ENCODE measurements at regions of chr2 and their contacts with region 1.

Region 1: DNA sequence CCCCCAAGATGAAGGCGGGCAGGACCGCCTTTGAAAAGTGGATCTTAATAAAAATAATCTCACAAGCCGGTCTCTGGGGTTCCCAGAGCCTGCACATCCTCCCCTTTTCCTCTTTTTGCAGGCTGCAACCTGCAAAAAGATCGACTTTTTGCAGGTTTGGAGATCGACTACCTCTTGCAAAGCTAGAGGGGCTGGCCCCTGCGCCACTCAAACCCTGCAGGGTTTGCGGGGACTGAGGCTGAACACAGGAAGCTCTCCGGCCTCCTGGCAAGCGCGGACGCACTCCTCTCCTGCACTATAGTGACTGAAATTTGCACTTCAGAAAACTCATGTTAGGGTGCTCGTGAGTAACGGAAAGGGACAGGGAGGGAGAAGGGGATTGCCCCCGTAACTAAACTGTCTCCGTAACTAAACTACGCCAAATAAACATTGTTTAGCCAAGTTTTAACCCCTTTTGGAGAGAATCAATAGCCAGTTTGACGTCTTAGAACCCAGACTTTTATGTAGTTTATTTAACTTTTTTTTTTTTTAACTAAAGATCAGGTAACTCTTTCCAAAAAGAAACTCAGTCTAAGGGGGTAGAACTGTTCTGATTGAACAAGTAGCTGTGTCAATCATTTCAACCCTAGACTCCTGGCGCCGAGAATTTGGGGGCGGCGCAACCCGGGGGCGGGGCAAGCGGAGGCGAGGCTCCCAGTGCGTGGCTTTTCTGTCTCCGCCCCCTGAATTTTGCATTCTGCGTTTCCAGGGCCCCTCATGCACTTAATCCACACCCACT is 2.5 kb downstream of the IGFBP5 start:
- DNase-seq: peak; percentile 84
- ATAC-seq: peak; percentile 59
- H3K4me3 Mint-ChIP-seq: peak overlapping the region; percentile 74
- H3K27ac Mint-ChIP-seq: peak overlapping the region; percentile 61
- H3K4me1 Mint-ChIP-seq: peaks cover 32% of the 10 kb centered on the region
- H3K27me3 Mint-ChIP-seq: peaks cover 56% of the 10 kb centered on the region

Region 2: DNA sequence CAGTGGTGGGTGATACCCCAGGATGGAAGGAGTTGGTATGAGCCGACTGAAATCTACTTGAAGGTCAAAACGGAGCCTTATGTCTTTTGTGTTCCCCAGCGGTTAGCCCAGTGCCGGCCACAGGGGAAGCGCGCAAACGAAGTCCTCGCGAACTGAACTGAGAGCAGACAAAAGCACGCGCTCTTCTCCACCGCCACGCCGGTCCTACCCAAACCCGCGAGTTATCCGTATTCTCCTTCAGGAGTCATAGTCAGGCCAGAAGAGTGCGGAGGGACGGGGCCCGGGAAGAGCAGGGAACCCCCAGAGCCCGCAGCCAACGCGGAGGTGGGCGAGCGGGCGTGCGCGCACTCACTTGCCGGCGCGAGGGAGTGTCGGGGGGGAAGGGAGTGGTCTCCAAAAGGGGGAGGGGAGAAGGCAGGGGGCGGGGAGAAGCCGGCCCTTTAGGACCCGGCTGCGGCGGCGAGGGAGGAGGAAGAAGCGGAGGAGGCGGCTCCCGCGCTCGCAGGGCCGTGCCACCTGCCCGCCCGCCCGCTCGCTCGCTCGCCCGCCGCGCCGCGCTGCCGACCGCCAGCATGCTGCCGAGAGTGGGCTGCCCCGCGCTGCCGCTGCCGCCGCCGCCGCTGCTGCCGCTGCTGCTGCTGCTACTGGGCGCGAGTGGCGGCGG is 59.7 kb before region 1 on chr2 and contains the start of gene IGFBP2:
- CTCF ChIA-PET with region 1: no interaction called
- POLR2A ChIA-PET with region 1: no interaction called
- intact Hi-C with region 1: loop called (anchors 2 to 5 kb)
- DNase-seq: peak; percentile 66
- ATAC-seq: peak; percentile 55
- H3K4me3 Mint-ChIP-seq: peak within 1 kb of the TSS; percentile 76
- H3K27ac Mint-ChIP-seq: no peak within 1 kb of the TSS
- H3K4me1 Mint-ChIP-seq: peaks cover 23% of the 10 kb centered on the region
- H3K27me3 Mint-ChIP-seq: peaks cover 53% of the 10 kb centered on the region
- total RNA-seq, gene IGFBP2: 9.8 to 11.5 TPM

Region 3: GRCh38 chr2:216661639-216662375 is 31.0 kb before region 1 on chr2:
- CTCF ChIA-PET with region 1: no interaction called
- POLR2A ChIA-PET with region 1: no interaction called
- intact Hi-C with region 1: no loop called
- DNase-seq: peak; percentile 43
- ATAC-seq: no peak
- H3K4me3 Mint-ChIP-seq: no peak overlapping the region
- H3K27ac Mint-ChIP-seq: no peak overlapping the region
- H3K4me1 Mint-ChIP-seq: no peaks in the 10 kb centered on the region
- H3K27me3 Mint-ChIP-seq: no peaks in the 10 kb centered on the region

Region 4: DNA sequence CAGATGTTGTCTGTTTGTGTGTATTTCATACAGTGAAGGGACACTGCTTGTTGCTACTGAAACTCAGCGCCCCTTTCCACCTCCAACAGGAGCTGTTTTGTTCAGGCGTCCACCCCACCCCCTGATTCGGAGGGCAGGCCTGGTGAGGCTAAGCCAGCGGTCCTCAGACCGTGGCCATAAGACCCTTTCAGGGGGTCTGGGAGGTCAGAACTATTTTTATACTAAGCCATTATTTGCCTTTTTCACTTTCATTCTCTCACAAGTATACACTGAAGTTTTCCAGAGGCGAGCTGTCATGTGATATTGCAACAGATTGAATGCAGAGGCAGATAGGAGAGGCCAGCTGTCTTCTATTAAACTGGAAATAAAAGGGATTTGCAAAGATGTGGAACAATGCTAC is 42.3 kb after region 1 on chr2:
- CTCF ChIA-PET with region 1: no interaction called
- POLR2A ChIA-PET with region 1: no interaction called
- intact Hi-C with region 1: no loop called
- DNase-seq: no peak
- ATAC-seq: no peak
- H3K4me3 Mint-ChIP-seq: no peak overlapping the region
- H3K27ac Mint-ChIP-seq: no peak overlapping the region
- H3K4me1 Mint-ChIP-seq: no peaks in the 10 kb centered on the region
- H3K27me3 Mint-ChIP-seq: peaks cover 2% of the 10 kb centered on the region

Region 5: DNA sequence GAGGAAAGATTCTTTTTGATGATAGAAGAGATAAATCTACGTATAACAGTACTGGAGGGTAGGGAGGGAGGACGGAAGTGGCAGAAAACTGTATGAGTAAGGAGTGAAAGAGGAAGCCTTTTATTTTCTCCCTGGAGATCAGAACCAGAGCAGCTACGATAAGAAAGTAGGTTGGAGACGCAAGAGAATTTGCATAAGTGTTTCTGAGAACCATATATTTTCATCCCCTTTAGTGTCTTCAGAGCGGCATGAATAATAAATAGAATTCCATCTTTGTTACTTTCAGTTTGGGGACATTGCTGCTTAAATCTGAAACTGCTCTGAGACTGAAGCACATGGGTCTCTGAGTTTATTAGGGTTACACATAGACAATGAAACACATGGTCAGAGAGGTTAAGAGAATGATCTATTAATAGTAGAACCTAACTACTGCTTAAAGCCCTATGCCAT is 397.2 kb after region 1 on chr2:
- CTCF ChIA-PET with region 1: no interaction called
- POLR2A ChIA-PET with region 1: no interaction called
- intact Hi-C with region 1: loop called in 1 of 2 experiments (anchors 2 kb)
- DNase-seq: peak; percentile 44
- ATAC-seq: peak; percentile 83
- H3K4me3 Mint-ChIP-seq: no peak overlapping the region
- H3K27ac Mint-ChIP-seq: no peak overlapping the region
- H3K4me1 Mint-ChIP-seq: peaks cover 58% of the 10 kb centered on the region
- H3K27me3 Mint-ChIP-seq: peaks cover 4% of the 10 kb centered on the region

Region 6: GRCh38 chr2:217166241-217166850 is 473.5 kb after region 1 on chr2:
- CTCF ChIA-PET with region 1: interaction called, 3 read pairs
- POLR2A ChIA-PET with region 1: no interaction called
- intact Hi-C with region 1: loop called (anchors 1 to 2 kb)
- DNase-seq: no peak
- ATAC-seq: no peak
- H3K4me3 Mint-ChIP-seq: no peak overlapping the region
- H3K27ac Mint-ChIP-seq: no peak overlapping the region
- H3K4me1 Mint-ChIP-seq: peaks cover 17% of the 10 kb centered on the region
- H3K27me3 Mint-ChIP-seq: peaks cover 14% of the 10 kb centered on the region

Region 7: GRCh38 chr2:217756375-217757107 is 1063.7 kb after region 1 on chr2:
- CTCF ChIA-PET with region 1: no interaction called
- POLR2A ChIA-PET with region 1: no interaction called
- intact Hi-C with region 1: loop called in 1 of 2 experiments (anchors 5 kb)
- DNase-seq: peak; percentile 89
- ATAC-seq: peak; percentile 84
- H3K4me3 Mint-ChIP-seq: peak overlapping the region; percentile 61
- H3K27ac Mint-ChIP-seq: peak overlapping the region; percentile 82
- H3K4me1 Mint-ChIP-seq: peaks cover 24% of the 10 kb centered on the region
- H3K27me3 Mint-ChIP-seq: peaks cover 4% of the 10 kb centered on the region

Measured in activated CD4-positive, alpha-beta T cell treated with anti-CD3 and anti-CD28 coated beads for 36 hours (primary cell).